Ascending aorta (tissue), 2 donors: ENCODE measurements at regions of chr12 and their contacts with region 1.

Region 1: DNA sequence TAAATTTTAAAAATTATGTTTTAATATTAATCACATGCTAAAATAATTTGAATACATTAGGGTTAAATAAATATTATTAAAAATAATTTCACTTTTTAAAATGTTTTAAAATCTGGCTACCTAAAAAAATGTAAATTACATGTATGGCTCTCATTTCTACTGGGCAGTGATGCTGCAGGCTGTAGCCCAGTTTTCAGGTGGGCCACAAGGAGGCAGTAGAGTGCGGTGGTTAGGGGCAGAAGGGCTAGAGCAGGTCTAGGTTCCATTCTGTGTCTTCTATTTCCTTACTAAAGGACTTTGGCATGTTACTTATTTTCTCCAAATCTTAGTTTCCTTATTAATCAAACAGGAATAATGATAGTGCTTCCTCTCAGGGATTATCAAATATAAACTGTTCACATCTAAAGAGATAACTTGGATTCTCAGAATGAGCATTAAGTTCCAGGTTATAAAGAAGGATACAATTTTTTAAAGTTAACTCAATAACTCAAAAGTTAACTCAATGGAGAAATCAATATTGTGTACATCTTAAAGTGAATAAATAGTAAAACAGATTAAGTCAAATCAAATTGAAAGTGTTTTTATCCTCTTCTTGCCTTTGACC is 54.9 kb upstream of the OVCH1 start:
- DNase-seq: peak in 1 of 2 donors; percentile 74
- H3K4me3 ChIP-seq: no peak overlapping the region
- H3K27ac ChIP-seq: peak overlapping the region in 1 of 2 donors; percentile 41
- H3K4me1 ChIP-seq: peaks cover 0 to 5% of the 10 kb centered on the region in 2 donors
- H3K27me3 ChIP-seq: no peaks in the 10 kb centered on the region
- CTCF ChIP-seq: peak; percentile 52 to 84 (median 77)

Region 2: GRCh38 chr12:30201301-30202160 is 649.1 kb after region 1 on chr12:
- intact Hi-C with region 1: loop called (anchors 5 kb)
- DNase-seq: no peak
- H3K4me3 ChIP-seq: peak overlapping the region; percentile 45 to 67
- H3K27ac ChIP-seq: no peak overlapping the region
- H3K4me1 ChIP-seq: peaks cover 0 to 3% of the 10 kb centered on the region in 2 donors
- H3K27me3 ChIP-seq: no peaks in the 10 kb centered on the region
- CTCF ChIP-seq: peak in 2 of 3 experiments; percentile 10 to 15

Region 3: GRCh38 chr12:30286345-30286926 is 734.0 kb after region 1 on chr12:
- intact Hi-C with region 1: loop called (anchors 10 kb)
- DNase-seq: no peak
- H3K4me3 ChIP-seq: no peak overlapping the region
- H3K27ac ChIP-seq: no peak overlapping the region
- H3K4me1 ChIP-seq: no peaks in the 10 kb centered on the region
- H3K27me3 ChIP-seq: no peaks in the 10 kb centered on the region
- CTCF ChIP-seq: peak in 2 of 3 experiments; percentile 33 to 50